ENCODE measurements at regions of chr17 and their contacts with region 1.

Region 1: DNA sequence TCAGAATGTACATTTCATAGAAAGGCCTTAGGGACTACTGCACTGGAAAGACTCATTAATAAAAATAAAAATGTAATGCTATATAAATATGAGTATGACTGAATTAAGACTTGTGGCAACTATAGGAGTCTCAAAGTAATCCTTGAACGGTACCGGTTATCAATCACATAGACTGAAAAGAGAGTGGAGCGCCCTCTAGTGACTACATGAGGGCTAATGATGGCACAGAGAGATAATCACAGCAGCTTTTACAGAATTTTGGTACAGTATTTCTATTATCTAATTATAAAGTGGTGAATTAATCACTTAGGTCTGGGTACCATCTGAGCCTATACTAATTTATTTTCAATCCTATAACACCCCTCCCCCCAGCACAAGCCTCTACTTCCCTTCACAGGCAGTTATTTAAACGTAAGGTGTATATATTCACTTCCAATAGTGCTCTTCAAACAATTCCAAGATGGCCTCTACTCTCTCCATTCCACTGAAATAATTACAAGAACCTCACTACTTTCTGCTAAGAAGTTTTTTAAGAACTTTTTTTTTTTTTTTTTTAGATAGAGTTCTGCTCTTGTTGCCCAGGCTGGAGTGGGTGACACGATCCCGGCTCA is 40.7 kb upstream of the ANKFY1 start:
- DNase-seq: peak in 1 of 2 experiments; percentile 11
- H3K4me3 ChIP-seq: no peak overlapping the region
- H3K27ac ChIP-seq: no peak overlapping the region
- H3K4me1 ChIP-seq: no peaks in the 10 kb centered on the region
- H3K27me3 ChIP-seq: no peaks in the 10 kb centered on the region
- CTCF ChIP-seq: peak; percentile 84

Region 2: GRCh38 chr17:4229627-4230541 is 74.6 kb before region 1 on chr17:
- CTCF ChIA-PET with region 1: no interaction called
- POLR2A ChIA-PET with region 1: interaction called, 20 read pairs
- intact Hi-C with region 1: no loop called
- DNase-seq: peak; percentile 35 to 73
- H3K4me3 ChIP-seq: no peak overlapping the region
- H3K27ac ChIP-seq: peak overlapping the region; percentile 22
- H3K4me1 ChIP-seq: peaks cover 15% of the 10 kb centered on the region
- H3K27me3 ChIP-seq: no peaks in the 10 kb centered on the region
- CTCF ChIP-seq: no peak

Measured in PC-9 (cell line).